Heart right ventricle (tissue), 16 donors: ENCODE measurements at regions of chr5 and their contacts with region 1.

Region 1: GRCh38 chr5:36305571-36306326 is 4.0 kb upstream of the RANBP3L start:
- DNase-seq: peak; percentile 40 to 44
- ATAC-seq: peak; percentile 38 to 88 (median 76)
- H3K4me3 ChIP-seq: no peak overlapping the region
- H3K27ac ChIP-seq: no peak overlapping the region
- H3K4me1 ChIP-seq: peaks cover 0 to 30% (median 23%) of the 10 kb centered on the region in 9 donors
- H3K27me3 ChIP-seq: no peaks in the 10 kb centered on the region
- CTCF ChIP-seq: peak; percentile 42 to 81 (median 77)

Region 2: GRCh38 chr5:36177715-36178523 is 127.8 kb before region 1 on chr5:
- intact Hi-C with region 1: loop called in 6 of 10 experiments (anchors 1 to 10 kb)
- DNase-seq: no peak
- ATAC-seq: peak in 3 of 8 donors; percentile 49 to 57 (median 56)
- H3K4me3 ChIP-seq: no peak overlapping the region
- H3K27ac ChIP-seq: no peak overlapping the region
- H3K4me1 ChIP-seq: no peaks in the 10 kb centered on the region
- H3K27me3 ChIP-seq: no peaks in the 10 kb centered on the region
- CTCF ChIP-seq: peak; percentile 27 to 69 (median 59)

Region 3: GRCh38 chr5:36241631-36242533 is 63.9 kb before region 1 on chr5 and contains the start of gene NADK2:
- intact Hi-C with region 1: loop called in 5 of 10 experiments (anchors 2 to 10 kb)
- DNase-seq: peak; percentile 95 to 97
- ATAC-seq: peak; percentile 92 to 97 (median 95)
- H3K4me3 ChIP-seq: peak within 1 kb of the TSS; percentile 63 to 96 (median 90)
- H3K27ac ChIP-seq: peak within 1 kb of the TSS; percentile 87 to 98 (median 97)
- H3K4me1 ChIP-seq: peaks cover 0 to 48% (median 36%) of the 10 kb centered on the region in 9 donors
- H3K27me3 ChIP-seq: no peaks in the 10 kb centered on the region
- CTCF ChIP-seq: peak; percentile 45 to 89 (median 75)
- total RNA-seq, gene NADK2: 35.7 to 53.5 (median 38.9) TPM

Region 4: DNA sequence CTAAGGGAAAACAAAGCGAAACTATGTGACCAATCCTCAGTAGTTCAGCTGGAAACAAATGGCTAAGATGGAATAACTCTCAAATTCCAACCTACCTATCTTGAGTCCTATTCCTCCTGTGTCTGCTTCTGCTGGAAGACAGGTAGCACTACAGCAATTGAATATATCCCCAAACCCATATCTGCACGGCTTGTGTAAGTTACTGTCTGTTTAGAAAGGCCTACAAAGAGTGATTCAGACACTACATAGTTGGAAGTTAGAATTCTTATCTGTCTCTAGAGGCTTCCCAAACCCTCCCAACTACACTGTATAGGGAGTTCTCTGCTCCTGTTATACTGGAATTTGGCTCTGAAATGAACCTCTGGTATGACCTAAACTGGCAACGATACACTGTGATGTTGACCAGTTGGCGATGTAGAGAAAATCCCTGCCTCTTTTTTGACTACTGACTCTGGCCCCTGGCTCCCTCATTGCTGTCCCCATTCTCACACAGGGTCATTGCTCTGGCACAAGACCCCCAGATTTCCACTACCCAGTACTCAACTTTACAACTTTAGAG is 41.5 kb before region 1 on chr5:
- intact Hi-C with region 1: loop called in 9 of 10 experiments (anchors 1 to 5 kb)
- DNase-seq: no peak
- ATAC-seq: no peak
- H3K4me3 ChIP-seq: no peak overlapping the region
- H3K27ac ChIP-seq: no peak overlapping the region
- H3K4me1 ChIP-seq: no peaks in the 10 kb centered on the region
- H3K27me3 ChIP-seq: no peaks in the 10 kb centered on the region
- CTCF ChIP-seq: no peak

Region 5: DNA sequence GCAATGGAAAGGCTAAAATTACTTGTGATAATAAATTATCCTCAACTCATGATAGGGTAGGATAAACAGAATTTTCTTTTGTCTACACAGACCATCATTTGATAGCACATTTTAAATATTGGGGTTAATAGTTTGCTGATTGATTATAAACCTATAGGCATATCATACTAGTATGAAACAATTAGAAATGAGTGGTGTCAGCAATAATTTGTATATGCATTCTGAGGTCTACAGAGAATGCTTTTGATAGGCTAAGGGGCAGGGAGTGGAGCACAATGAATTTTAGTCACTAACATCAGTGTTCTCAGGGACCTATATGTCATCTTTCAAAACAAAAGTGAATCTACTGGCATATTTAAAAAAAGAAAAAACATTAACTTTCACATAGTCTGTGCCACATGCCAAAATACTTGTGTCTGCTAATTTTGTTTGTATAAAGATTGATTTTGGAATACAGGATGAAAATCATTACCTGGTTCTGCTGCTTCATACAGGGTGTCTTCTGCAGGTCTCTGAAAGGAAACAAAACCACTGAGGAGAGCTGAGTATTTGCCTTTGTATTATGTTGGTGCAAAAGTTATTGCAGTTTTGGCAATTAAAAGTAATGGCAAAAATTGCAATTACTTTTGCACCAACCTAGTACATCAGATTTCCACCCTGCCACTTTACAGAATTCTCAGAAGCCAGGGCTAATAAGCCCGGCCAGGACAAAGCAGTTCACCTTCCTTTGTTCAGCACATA is 36.1 kb before region 1 on chr5:
- intact Hi-C with region 1: loop called in 9 of 10 experiments (anchors 1 to 5 kb)
- DNase-seq: no peak
- ATAC-seq: no peak
- H3K4me3 ChIP-seq: no peak overlapping the region
- H3K27ac ChIP-seq: no peak overlapping the region
- H3K4me1 ChIP-seq: peaks cover 0 to 7% (median 0%) of the 10 kb centered on the region in 9 donors
- H3K27me3 ChIP-seq: no peaks in the 10 kb centered on the region
- CTCF ChIP-seq: no peak